T-cell (primary cell): ENCODE measurements at regions of chr7 and their contacts with region 1.

Region 1: DNA sequence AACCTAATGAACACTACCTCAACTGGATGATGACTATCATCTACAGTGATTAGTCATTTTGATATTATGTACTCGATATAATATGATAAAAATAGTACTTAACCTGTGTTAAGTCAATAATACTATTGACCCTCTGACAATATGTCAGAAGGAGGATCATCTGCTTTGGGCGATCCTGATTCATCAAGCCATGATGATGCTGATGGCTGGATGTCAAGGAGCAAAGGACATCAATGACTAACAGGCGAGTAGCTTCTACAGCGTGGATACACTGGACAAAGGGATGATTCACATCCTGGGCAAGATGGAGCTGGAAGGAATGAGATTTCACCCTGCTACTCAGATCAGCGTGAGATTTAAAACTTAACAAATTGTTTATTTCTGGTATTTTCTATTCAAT is 94.4 kb upstream of the SKAP2 start:
- DNase-seq: no peak
- ATAC-seq: no peak
- H3K4me3 ChIP-seq: no peak overlapping the region
- H3K4me3 Mint-ChIP-seq: no peak overlapping the region
- H3K27ac ChIP-seq: no peak overlapping the region
- H3K27ac Mint-ChIP-seq: no peak overlapping the region
- H3K4me1 ChIP-seq: no peaks in the 10 kb centered on the region
- H3K4me1 Mint-ChIP-seq: no peaks in the 10 kb centered on the region
- H3K27me3 ChIP-seq: no peaks in the 10 kb centered on the region
- H3K27me3 Mint-ChIP-seq: peaks cover 16% of the 10 kb centered on the region in 2 donors

Region 2: GRCh38 chr7:25933921-25934320 is 1024.9 kb before region 1 on chr7:
- CTCF ChIA-PET with region 1: interaction called in 1 of 2 experiments, 11 read pairs
- POLR2A ChIA-PET with region 1: no interaction called
- DNase-seq: no peak
- ATAC-seq: no peak
- H3K4me3 ChIP-seq: no peak overlapping the region
- H3K4me3 Mint-ChIP-seq: no peak overlapping the region
- H3K27ac ChIP-seq: no peak overlapping the region
- H3K27ac Mint-ChIP-seq: no peak overlapping the region
- H3K4me1 ChIP-seq: no peaks in the 10 kb centered on the region
- H3K4me1 Mint-ChIP-seq: no peaks in the 10 kb centered on the region
- H3K27me3 ChIP-seq: peaks cover 0 to 11% of the 10 kb centered on the region in 2 experiments
- H3K27me3 Mint-ChIP-seq: peaks cover 28 to 53% of the 10 kb centered on the region in 2 donors

Region 3: DNA sequence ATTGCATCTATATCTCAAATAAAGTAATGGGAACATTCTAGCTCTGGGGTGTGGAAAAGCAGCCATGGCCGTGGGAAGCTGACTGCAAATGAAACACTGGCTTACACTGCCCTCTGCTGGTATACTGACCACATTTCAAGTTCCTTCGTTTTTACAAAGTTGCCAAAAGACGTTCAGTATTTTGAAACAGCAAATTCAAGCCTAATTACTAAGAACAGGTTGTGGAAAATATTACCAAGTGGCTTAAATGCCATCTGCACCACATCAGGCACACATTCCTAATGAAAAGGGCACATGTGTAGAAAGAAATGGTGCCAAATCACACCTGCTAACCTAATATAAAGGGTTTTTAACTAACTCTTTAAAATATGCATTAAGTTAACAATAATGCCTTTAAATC is 1137.9 kb after region 1 on chr7:
- CTCF ChIA-PET with region 1: interaction called in 1 of 2 experiments, 11 read pairs
- POLR2A ChIA-PET with region 1: no interaction called
- DNase-seq: peak in 26 of 35 experiments; percentile 1 to 74 (median 21)
- ATAC-seq: peak in 3 of 4 experiments; percentile 36 to 54 (median 53)
- H3K4me3 ChIP-seq: no peak overlapping the region
- H3K4me3 Mint-ChIP-seq: no peak overlapping the region
- H3K27ac ChIP-seq: no peak overlapping the region
- H3K27ac Mint-ChIP-seq: no peak overlapping the region
- H3K4me1 ChIP-seq: no peaks in the 10 kb centered on the region
- H3K4me1 Mint-ChIP-seq: peaks cover 0 to 15% (median 6%) of the 10 kb centered on the region in 3 donors
- H3K27me3 ChIP-seq: no peaks in the 10 kb centered on the region
- H3K27me3 Mint-ChIP-seq: no peaks in the 10 kb centered on the region